ENCODE measurements at regions of chr17 and their contacts with region 1.

Region 1: GRCh38 chr17:64281962-64282727 is 19.1 kb upstream of the TEX2 start:
- DNase-seq: peak in 5 of 6 donors; percentile 32 to 65 (median 51)
- ATAC-seq: peak; percentile 70 to 93 (median 86)
- H3K4me3 ChIP-seq: no peak overlapping the region
- H3K27ac ChIP-seq: no peak overlapping the region
- H3K4me1 ChIP-seq: peaks cover 0 to 3% (median 0%) of the 10 kb centered on the region in 3 donors
- H3K27me3 ChIP-seq: no peaks in the 10 kb centered on the region
- CTCF ChIP-seq: peak; percentile 55 to 72 (median 61)

Region 2: GRCh38 chr17:63919311-63919723 is 362.8 kb before region 1 on chr17:
- intact Hi-C with region 1: loop called in 1 of 3 experiments (anchors 10 kb)
- DNase-seq: peak in 4 of 6 donors; percentile 28 to 66 (median 44)
- ATAC-seq: peak; percentile 78 to 93 (median 92)
- H3K4me3 ChIP-seq: no peak overlapping the region
- H3K27ac ChIP-seq: no peak overlapping the region
- H3K4me1 ChIP-seq: no peaks in the 10 kb centered on the region
- H3K27me3 ChIP-seq: no peaks in the 10 kb centered on the region
- CTCF ChIP-seq: peak; percentile 87 to 96 (median 90)

Region 3: DNA sequence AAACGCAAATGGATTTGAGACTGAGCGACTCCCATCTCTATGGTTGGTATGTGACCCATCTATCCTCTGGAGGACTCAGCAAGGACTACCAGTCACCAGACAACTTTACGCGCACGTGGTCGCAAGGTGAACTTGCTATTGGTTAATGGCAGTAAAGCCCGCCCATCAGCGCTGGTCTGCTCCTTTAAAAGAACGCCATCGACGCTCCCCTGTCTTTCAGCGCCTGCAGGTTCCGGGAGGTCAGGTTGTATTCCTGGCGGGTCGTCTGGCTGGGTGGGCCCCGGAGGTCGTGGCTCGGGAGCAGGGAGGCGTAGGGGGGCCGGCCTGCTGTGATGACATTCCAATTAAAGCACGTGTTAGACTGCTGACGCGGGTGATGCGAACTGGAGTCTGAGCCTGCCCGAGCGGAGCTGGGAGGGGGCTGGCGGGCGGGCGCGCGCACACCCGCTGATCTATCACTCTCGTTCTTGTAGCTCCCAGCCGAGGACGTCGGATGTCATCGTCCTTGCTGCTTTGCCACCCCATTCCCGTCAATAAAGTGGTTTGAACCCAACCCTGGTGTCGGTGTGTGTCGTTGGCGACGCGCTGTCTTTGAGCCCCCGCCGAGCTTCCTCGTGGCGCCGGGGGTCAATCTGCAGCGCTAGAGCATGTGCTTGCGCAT is 136.3 kb before region 1 on chr17:
- intact Hi-C with region 1: loop called in 1 of 3 experiments (anchors 5 kb)
- DNase-seq: peak; percentile 90 to 99 (median 96)
- ATAC-seq: peak; percentile 87 to 93 (median 88)
- H3K4me3 ChIP-seq: peak overlapping the region; percentile 70 to 97 (median 86)
- H3K27ac ChIP-seq: peak overlapping the region; percentile 93 to 98 (median 96)
- H3K4me1 ChIP-seq: peaks cover 21 to 33% (median 32%) of the 10 kb centered on the region in 3 donors
- H3K27me3 ChIP-seq: no peaks in the 10 kb centered on the region
- CTCF ChIP-seq: no peak

Region 4: GRCh38 chr17:64406321-64407200 is 124.4 kb after region 1 on chr17:
- intact Hi-C with region 1: no loop called
- DNase-seq: no peak
- ATAC-seq: no peak
- H3K4me3 ChIP-seq: no peak overlapping the region
- H3K27ac ChIP-seq: no peak overlapping the region
- H3K4me1 ChIP-seq: no peaks in the 10 kb centered on the region
- H3K27me3 ChIP-seq: no peaks in the 10 kb centered on the region
- CTCF ChIP-seq: no peak

Region 5: DNA sequence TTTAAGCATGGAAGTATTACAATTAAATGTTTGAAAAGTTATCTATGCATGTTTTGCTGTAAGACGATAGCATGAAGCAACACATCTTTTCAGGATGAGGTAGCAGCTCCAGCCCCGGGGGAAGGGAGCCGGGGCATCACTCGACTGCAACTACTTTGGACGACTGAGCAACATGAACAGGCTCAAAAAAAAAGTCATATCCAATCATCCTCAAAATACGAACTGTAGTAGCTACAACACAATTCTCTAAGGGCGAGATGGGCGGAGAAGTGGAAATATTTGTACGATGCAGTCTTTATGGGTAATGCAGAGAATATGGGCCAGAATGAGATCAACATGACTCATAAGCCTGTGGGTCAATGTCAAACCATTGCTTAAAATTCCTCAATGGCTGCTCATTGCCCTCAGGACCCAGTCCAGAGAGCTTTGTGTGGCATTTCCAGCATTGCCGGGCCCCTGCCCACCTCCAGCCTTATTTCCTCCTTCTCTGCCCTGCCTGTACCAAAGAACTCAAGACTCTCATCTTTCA is 397.6 kb after region 1 on chr17:
- intact Hi-C with region 1: no loop called
- DNase-seq: no peak
- ATAC-seq: peak in 1 of 4 donors; percentile 56
- H3K4me3 ChIP-seq: no peak overlapping the region
- H3K27ac ChIP-seq: no peak overlapping the region
- H3K4me1 ChIP-seq: no peaks in the 10 kb centered on the region
- H3K27me3 ChIP-seq: no peaks in the 10 kb centered on the region
- CTCF ChIP-seq: no peak

Measured in pancreas (tissue), 10 donors.